Ascending aorta (tissue), 2 donors: ENCODE measurements at regions of chr3 and their contacts with region 1.

Region 1: GRCh38 chr3:120498556-120499346 is 48.0 kb upstream of the FSTL1 start:
- DNase-seq: no peak
- H3K4me3 ChIP-seq: no peak overlapping the region
- H3K27ac ChIP-seq: peak overlapping the region in 1 of 2 donors; percentile 50
- H3K4me1 ChIP-seq: peaks cover 7 to 26% of the 10 kb centered on the region in 2 donors
- H3K27me3 ChIP-seq: no peaks in the 10 kb centered on the region
- CTCF ChIP-seq: no peak

Region 2: DNA sequence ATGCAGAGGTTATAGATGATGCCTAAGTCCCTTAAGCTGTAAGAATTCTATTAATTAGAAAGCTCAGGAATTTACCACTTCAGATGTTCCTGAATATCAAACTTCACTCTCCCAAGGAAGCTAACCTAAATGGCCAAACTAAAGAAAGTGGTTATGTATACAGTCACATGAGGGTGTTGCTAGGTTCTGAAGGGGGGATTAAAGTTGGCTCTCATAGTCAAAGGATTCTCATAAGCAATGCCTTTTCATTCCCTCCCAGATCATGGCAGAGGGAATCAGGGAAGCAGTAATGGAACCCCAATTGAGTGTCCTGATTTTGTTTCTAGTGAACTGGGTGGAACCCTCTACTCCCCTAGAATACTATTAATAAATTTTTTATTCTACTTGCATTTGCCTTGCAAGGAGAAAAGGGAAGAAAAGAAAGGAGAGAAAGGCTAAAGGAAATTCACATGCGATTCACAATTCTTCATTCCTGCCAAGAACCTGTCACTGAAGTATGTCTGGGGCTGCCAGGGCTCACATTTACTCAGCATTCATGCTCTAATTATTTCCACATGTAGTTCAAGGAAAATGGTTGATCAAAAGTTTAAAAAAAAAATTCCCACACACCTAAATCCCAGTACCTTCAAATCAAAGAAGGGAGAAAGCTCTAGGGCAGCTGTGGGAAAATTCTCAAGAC is 73.0 kb before region 1 on chr3:
- intact Hi-C with region 1: loop called (anchors 2 kb)
- DNase-seq: peak in 1 of 2 donors; percentile 83
- H3K4me3 ChIP-seq: peak overlapping the region in 1 of 2 donors; percentile 32
- H3K27ac ChIP-seq: peak overlapping the region; percentile 77 to 80
- H3K4me1 ChIP-seq: peaks cover 56 to 92% of the 10 kb centered on the region in 2 donors
- H3K27me3 ChIP-seq: no peaks in the 10 kb centered on the region
- CTCF ChIP-seq: no peak

Region 3: GRCh38 chr3:120469447-120469846 is 29.3 kb before region 1 on chr3:
- intact Hi-C with region 1: loop called (anchors 2 kb)
- DNase-seq: no peak
- H3K4me3 ChIP-seq: no peak overlapping the region
- H3K27ac ChIP-seq: peak overlapping the region; percentile 14 to 40
- H3K4me1 ChIP-seq: peaks cover 0 to 13% of the 10 kb centered on the region in 2 donors
- H3K27me3 ChIP-seq: no peaks in the 10 kb centered on the region
- CTCF ChIP-seq: no peak

Region 4: DNA sequence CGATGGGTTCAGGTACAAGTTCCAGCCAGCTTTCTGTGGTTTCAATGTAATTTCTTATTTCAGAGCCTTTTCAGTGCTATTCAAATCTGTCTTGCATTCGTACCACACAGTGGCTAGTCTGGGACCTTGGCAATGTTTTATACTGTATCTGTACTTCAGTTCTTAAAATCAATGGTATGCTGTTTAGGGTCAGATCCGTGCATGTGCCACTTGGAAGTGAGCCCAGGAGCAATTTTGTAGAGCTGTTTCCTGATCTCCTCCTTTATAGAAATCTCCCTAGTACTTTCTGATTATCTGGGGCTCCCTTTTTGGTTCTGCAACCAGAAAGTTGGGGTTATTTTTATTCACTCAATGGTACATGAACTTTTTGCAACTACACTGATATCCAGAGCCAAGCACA is 37.9 kb after region 1 on chr3:
- intact Hi-C with region 1: no loop called
- DNase-seq: no peak
- H3K4me3 ChIP-seq: no peak overlapping the region
- H3K27ac ChIP-seq: no peak overlapping the region
- H3K4me1 ChIP-seq: no peaks in the 10 kb centered on the region
- H3K27me3 ChIP-seq: no peaks in the 10 kb centered on the region
- CTCF ChIP-seq: no peak